Activated T-helper 1 cell treated with anti-CD3 and anti-CD28 coated beads, Interleukin-12 subunit alpha, Interleukin-12 subunit beta, Interleukin-2, Interleukin-4 antibody, amounts not matched to agents 30 ng/mL and 10 ng/mL and 1 ng/mL, durations not matched to agents 14 hours and 24 hours and 36 hours (primary cell): ENCODE measurements at regions of chr10 and their contacts with region 1.

Region 1: GRCh38 chr10:101238732-101239105 is 9.5 kb upstream of the LBX1 start:
- DNase-seq: no peak
- H3K4me3 Mint-ChIP-seq: no peak overlapping the region
- H3K27ac Mint-ChIP-seq: no peak overlapping the region
- H3K4me1 Mint-ChIP-seq: peaks cover 9% of the 10 kb centered on the region
- H3K27me3 Mint-ChIP-seq: peaks cover 67% of the 10 kb centered on the region

Region 2: DNA sequence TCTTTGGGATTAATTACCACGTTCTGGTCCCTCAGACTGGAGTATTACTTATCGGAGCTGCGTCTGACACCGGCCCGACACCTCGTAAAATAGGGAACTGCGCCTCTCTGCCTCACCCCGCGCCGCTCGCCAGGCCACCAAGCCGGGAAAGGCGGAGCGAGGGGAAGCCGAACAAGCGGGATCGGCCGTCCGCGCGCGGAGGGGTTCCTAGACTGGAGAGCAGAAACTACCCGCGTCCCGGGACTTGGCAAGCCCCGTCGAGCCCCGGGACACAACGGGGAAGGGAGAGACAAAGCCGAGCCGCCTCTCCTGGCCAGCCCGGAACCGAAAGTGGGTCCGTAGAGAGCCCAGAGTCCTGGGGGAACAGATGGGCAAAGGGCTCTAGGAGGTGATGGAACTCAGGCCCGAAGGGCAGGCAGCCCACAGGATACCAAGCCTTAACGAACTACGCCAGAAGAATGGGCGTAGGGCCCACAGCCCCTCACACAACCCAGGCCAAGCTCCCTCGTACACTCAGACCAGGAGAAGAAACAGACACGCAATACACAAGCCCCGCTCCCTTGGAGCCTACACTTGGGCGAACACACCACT is 15.9 kb before region 1 on chr10:
- intact Hi-C with region 1: loop called (anchors 1 kb)
- DNase-seq: no peak
- H3K4me3 Mint-ChIP-seq: no peak overlapping the region
- H3K27ac Mint-ChIP-seq: no peak overlapping the region
- H3K4me1 Mint-ChIP-seq: peaks cover 19% of the 10 kb centered on the region
- H3K27me3 Mint-ChIP-seq: peaks cover 83% of the 10 kb centered on the region

Region 3: GRCh38 chr10:101228153-101228973 is 10.4 kb before region 1 on chr10:
- intact Hi-C with region 1: loop called (anchors 1 kb)
- DNase-seq: no peak
- H3K4me3 Mint-ChIP-seq: no peak overlapping the region
- H3K27ac Mint-ChIP-seq: peak overlapping the region; percentile 71
- H3K4me1 Mint-ChIP-seq: peaks cover 17% of the 10 kb centered on the region
- H3K27me3 Mint-ChIP-seq: peaks cover 76% of the 10 kb centered on the region

Region 4: GRCh38 chr10:101291331-101292193 is 52.8 kb after region 1 on chr10:
- intact Hi-C with region 1: loop called (anchors 5 kb)
- DNase-seq: no peak
- H3K4me3 Mint-ChIP-seq: peak overlapping the region; percentile 73
- H3K27ac Mint-ChIP-seq: no peak overlapping the region
- H3K4me1 Mint-ChIP-seq: no peaks in the 10 kb centered on the region
- H3K27me3 Mint-ChIP-seq: peaks cover 76% of the 10 kb centered on the region